K562 (cell line): ENCODE measurements at regions of chr1 and their contacts with region 1.

Region 1: DNA sequence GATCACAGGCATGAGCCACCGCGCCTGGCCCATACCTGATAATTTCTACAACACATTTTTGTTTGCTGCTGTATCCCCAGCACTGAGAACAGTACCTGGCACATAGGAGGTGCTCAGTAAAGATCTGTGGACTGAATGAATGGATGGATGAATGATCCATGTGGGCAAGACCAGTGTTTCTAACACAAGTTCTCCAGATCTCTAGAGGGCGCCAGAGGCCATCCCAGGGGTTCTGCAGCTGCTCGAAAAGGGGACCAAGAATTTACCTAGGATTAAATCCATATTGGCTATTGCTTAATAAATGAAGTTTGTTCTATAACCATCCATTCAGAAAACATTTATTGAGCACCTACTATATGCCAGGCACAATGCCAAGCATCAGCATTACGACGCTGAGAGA is 167.7 kb downstream of the ACTL8 start:
- DNase-seq: peak; percentile 54 to 63 (median 60)
- ATAC-seq: peak; percentile 68; the same call in 2 of the 3 replicates
- H3K4me3 ChIP-seq: no peak overlapping the region
- H3K27ac ChIP-seq: no peak overlapping the region
- H3K4me1 ChIP-seq: no peaks in the 10 kb centered on the region
- H3K27me3 ChIP-seq: no peaks in the 10 kb centered on the region
- CTCF ChIP-seq: peak; percentile 72 to 88 (median 75)
- EP300 ChIP-seq: no peak
- POLR2A ChIP-seq: no peak
- RAD21 ChIP-seq: peak; percentile 53 to 76

Region 2: GRCh38 chr1:17606826-17607440 is 315.9 kb before region 1 on chr1:
- CTCF ChIA-PET with region 1: no interaction called
- POLR2A ChIA-PET with region 1: no interaction called
- in situ Hi-C with region 1: no loop called
- intact Hi-C with region 1: no loop called
- DNase-seq: peak; percentile 77 to 85 (median 83)
- ATAC-seq: peak; percentile 87
- H3K4me3 ChIP-seq: no peak overlapping the region
- H3K27ac ChIP-seq: no peak overlapping the region
- H3K4me1 ChIP-seq: no peaks in the 10 kb centered on the region
- H3K27me3 ChIP-seq: peaks cover 13 to 48% of the 10 kb centered on the region in 2 experiments; a peak in 3 of 5 replicates
- CTCF ChIP-seq: peak; percentile 88 to 97 (median 97)
- EP300 ChIP-seq: no peak
- POLR2A ChIP-seq: no peak
- RAD21 ChIP-seq: peak; percentile 65 to 88

Region 3: DNA sequence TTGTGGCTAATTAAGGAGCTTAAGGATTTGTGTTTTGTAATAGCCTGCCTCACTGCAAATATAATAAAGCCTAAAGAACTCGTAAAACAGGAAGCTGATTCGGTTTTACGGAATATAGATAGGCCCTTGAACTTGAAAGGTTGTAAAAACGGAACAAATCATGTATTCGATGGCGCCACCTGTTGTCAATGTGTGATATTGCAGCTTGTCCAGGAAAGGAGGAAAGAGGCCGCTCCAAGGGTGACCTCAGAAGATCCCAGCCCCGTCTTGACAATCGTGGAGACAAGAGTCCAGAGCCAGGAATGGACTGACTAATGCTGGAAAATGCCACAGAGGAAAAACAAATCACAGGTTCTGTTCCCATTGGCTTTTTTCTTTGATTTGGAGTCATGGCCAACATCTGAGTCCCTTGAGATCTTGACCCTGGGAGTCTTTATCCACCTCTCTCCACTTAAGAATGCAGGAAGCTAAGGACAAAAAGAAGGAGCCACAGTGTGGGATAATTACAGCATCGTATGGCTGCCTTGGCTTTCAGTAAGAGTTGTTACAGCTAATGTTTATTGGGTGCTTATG is 177.7 kb after region 1 on chr1:
- CTCF ChIA-PET with region 1: interaction called, 3 read pairs
- POLR2A ChIA-PET with region 1: no interaction called
- in situ Hi-C with region 1: loop called (anchors 10 kb)
- intact Hi-C with region 1: loop called (anchors 2 kb)
- DNase-seq: peak; percentile 71 to 88 (median 82)
- ATAC-seq: peak; percentile 82
- H3K4me3 ChIP-seq: no peak overlapping the region
- H3K27ac ChIP-seq: no peak overlapping the region
- H3K4me1 ChIP-seq: no peaks in the 10 kb centered on the region
- H3K27me3 ChIP-seq: no peaks in the 10 kb centered on the region; a peak in 1 of 5 replicates
- CTCF ChIP-seq: peak; percentile 65 to 89 (median 83)
- EP300 ChIP-seq: no peak
- POLR2A ChIP-seq: no peak
- RAD21 ChIP-seq: peak; percentile 35 to 74

Region 4: DNA sequence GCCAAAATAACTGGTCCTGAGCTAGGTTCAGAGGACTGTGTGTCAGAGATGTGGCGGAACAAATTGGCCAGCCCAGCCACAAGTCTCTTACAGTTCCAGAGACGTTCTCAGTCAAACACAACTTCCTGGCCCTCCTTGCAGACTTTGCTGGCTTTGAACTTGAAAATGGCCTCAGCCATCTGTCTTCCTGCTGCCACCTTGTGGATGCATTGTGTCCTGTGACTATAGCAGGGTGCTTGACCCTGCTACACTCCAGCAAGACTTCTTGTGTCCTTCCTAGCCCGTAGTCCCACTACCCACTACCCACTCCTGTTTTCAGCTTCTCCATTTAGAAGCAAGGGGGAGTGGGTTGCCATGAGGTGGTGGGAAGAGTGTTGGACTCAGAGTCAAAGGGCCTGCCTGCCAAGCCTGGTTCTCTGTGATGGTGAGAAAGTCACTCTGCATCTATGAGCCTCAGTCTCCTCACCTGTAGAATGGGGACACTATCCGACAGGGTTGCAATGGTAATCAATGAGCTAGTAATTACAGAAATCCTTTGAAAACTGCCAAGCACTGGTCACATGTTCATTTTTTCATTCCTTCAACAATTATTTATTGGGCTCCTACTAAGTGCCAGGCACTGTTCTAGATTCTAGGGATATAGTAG is 294.7 kb after region 1 on chr1:
- CTCF ChIA-PET with region 1: no interaction called
- POLR2A ChIA-PET with region 1: no interaction called
- in situ Hi-C with region 1: no loop called
- intact Hi-C with region 1: loop called (anchors 2 kb)
- DNase-seq: peak; percentile 52 to 58 (median 56)
- ATAC-seq: peak; percentile 77
- H3K4me3 ChIP-seq: no peak overlapping the region
- H3K27ac ChIP-seq: no peak overlapping the region
- H3K4me1 ChIP-seq: no peaks in the 10 kb centered on the region
- H3K27me3 ChIP-seq: peaks cover 0 to 10% of the 10 kb centered on the region in 2 experiments; a peak in 2 of 5 replicates
- CTCF ChIP-seq: peak; percentile 59 to 65 (median 61); a peak in 5 of 6 replicates
- EP300 ChIP-seq: no peak
- POLR2A ChIP-seq: no peak
- RAD21 ChIP-seq: peak in 1 of 2 experiments; percentile 35; a peak in 2 of 4 replicates

Region 5: GRCh38 chr1:18299441-18300338 is 376.9 kb after region 1 on chr1:
- CTCF ChIA-PET with region 1: no interaction called
- POLR2A ChIA-PET with region 1: no interaction called
- in situ Hi-C with region 1: no loop called
- intact Hi-C with region 1: loop called (anchors 5 kb)
- DNase-seq: peak; percentile 47 to 80 (median 76)
- ATAC-seq: peak; percentile 83
- H3K4me3 ChIP-seq: no peak overlapping the region
- H3K27ac ChIP-seq: no peak overlapping the region
- H3K4me1 ChIP-seq: no peaks in the 10 kb centered on the region
- H3K27me3 ChIP-seq: peaks cover 0 to 9% of the 10 kb centered on the region in 2 experiments; a peak in 1 of 5 replicates
- CTCF ChIP-seq: peak; percentile 76 to 88 (median 86)
- EP300 ChIP-seq: no peak
- POLR2A ChIP-seq: no peak
- RAD21 ChIP-seq: peak; percentile 35 to 66